HepG2 (cell line): ENCODE measurements at regions of chr9 and their contacts with region 1.

Region 1: GRCh38 chr9:73081979-73082657 is 69.5 kb upstream of the ANXA1 start:
- DNase-seq: peak; percentile 62
- ATAC-seq: peak; percentile 69
- H3K4me3 ChIP-seq: no peak overlapping the region
- H3K27ac ChIP-seq: no peak overlapping the region
- H3K4me1 ChIP-seq: peaks cover 6% of the 10 kb centered on the region
- H3K27me3 ChIP-seq: 0 out of 5 replicates have a peak, but pooled peaks cover 0 to 3% of the 10 kb centered on the region in 2 experiments
- CTCF ChIP-seq: peak; percentile 74
- EP300 ChIP-seq: no peak
- POLR2A ChIP-seq: no peak
- RAD21 ChIP-seq: peak; percentile 78

Region 2: DNA sequence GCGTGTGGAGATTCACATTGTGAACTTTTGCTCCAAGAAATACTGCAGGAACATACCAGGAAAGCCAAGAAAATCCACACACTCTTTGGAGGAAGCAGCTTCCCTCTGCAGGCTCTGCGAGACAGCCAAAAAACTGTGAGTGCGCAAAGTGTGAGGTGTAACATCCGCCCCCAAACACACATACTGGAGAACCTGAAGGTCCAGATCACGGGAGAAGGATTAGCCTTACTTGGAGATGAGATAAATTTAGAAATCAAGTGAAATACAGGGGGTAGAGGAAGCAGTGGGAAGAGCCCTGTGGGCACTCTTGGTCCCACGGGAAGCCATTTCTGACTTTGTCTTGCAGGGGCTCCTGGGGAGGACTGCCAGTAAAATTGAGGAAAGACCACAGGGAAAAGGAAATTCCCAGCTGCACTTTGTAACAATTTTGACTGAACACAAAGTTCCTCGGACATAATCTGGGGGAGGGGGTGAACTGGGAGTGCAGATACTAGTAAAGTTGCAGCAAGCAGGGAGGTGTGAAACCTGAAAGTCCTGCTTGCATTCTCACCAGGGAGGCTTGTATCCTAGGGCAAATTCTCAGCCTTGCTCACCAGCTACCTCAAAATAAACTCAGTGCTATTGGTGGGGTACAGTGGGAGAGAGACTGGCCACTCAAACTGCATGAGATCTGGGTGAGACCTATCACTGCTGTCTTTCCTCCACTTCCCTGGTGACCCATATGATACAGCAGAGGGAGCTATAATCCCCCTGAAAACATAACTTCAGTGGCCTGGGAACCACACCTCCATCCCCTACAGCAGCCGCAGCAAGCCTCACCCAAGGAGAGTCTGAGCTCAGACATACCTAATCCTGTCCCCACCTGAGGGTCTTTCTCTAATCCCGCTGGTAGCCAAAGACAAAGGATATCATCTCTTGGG is 238.3 kb before region 1 on chr9:
- CTCF ChIA-PET with region 1: interaction called, 14 read pairs
- POLR2A ChIA-PET with region 1: no interaction called
- in situ Hi-C with region 1: no loop called
- intact Hi-C with region 1: loop called (anchors 1 kb)
- DNase-seq: peak; percentile 74
- ATAC-seq: peak; percentile 100
- H3K4me3 ChIP-seq: peak overlapping the region; percentile 32 to 49 (median 40)
- H3K27ac ChIP-seq: peak overlapping the region; percentile 31
- H3K4me1 ChIP-seq: peaks cover 22% of the 10 kb centered on the region
- H3K27me3 ChIP-seq: no peaks in the 10 kb centered on the region
- CTCF ChIP-seq: peak; percentile 82
- EP300 ChIP-seq: no peak
- POLR2A ChIP-seq: no peak
- RAD21 ChIP-seq: peak; percentile 73; the same call in 1 of the 2 replicates

Region 3: DNA sequence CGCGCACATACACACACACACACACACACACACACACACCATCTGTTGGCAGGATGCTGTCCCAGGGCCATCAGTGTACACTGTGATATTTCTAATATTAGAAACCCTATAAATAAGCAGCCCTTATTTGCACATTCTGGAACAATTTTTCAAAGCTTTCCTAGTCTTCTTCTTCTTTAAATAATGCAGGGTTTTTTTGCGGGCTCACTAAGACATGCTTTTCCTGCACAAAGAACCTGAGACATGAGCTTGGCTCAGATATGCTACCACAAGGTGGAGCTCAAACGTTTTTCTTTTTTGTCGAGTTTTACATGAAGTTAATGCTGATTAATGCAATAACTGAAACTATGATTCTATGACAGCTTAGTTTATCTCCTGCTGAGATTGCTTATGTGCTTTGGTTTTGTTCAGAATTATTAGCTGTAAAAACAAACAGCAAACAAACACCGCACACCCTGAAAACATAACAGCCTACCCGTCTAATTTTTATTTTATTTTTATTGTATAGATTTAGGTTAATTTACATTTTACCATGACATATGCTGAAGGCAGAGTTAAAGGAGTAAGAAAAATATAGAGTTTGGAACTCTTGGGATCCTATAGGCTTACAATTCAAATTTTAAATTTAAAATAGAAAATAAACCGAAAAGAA is 225.0 kb before region 1 on chr9:
- CTCF ChIA-PET with region 1: interaction called, 15 read pairs
- POLR2A ChIA-PET with region 1: no interaction called
- in situ Hi-C with region 1: loop called (anchors 5 kb)
- intact Hi-C with region 1: loop called (anchors 1 kb)
- DNase-seq: peak; percentile 65
- ATAC-seq: no peak
- H3K4me3 ChIP-seq: no peak overlapping the region
- H3K27ac ChIP-seq: peak overlapping the region; percentile 99
- H3K4me1 ChIP-seq: peaks cover 30% of the 10 kb centered on the region
- H3K27me3 ChIP-seq: no peaks in the 10 kb centered on the region
- CTCF ChIP-seq: peak; percentile 70
- EP300 ChIP-seq: no peak
- POLR2A ChIP-seq: no peak
- RAD21 ChIP-seq: peak; percentile 43; the same call in 1 of the 2 replicates

Region 4: GRCh38 chr9:72871685-72872084 is 210.4 kb before region 1 on chr9:
- CTCF ChIA-PET with region 1: interaction called, 16 read pairs
- POLR2A ChIA-PET with region 1: no interaction called
- in situ Hi-C with region 1: no loop called
- intact Hi-C with region 1: loop called (anchors 1 kb)
- DNase-seq: peak; percentile 16
- ATAC-seq: no peak
- H3K4me3 ChIP-seq: no peak overlapping the region
- H3K27ac ChIP-seq: no peak overlapping the region
- H3K4me1 ChIP-seq: peaks cover 29% of the 10 kb centered on the region
- H3K27me3 ChIP-seq: no peaks in the 10 kb centered on the region
- CTCF ChIP-seq: peak; percentile 60
- EP300 ChIP-seq: no peak
- POLR2A ChIP-seq: no peak
- RAD21 ChIP-seq: peak; percentile 25; the same call in 1 of the 2 replicates

Region 5: GRCh38 chr9:73038613-73039012 is 43.5 kb before region 1 on chr9:
- CTCF ChIA-PET with region 1: no interaction called
- POLR2A ChIA-PET with region 1: no interaction called
- in situ Hi-C with region 1: no loop called
- intact Hi-C with region 1: loop called (anchors 5 kb)
- DNase-seq: no peak
- ATAC-seq: peak; percentile 73
- H3K4me3 ChIP-seq: peak overlapping the region in 1 of 3 experiments; percentile 43; a peak in 2 of 6 replicates
- H3K27ac ChIP-seq: peak overlapping the region; percentile 25
- H3K4me1 ChIP-seq: peaks cover 29% of the 10 kb centered on the region
- H3K27me3 ChIP-seq: no peaks in the 10 kb centered on the region
- CTCF ChIP-seq: no peak
- EP300 ChIP-seq: no peak
- POLR2A ChIP-seq: no peak
- RAD21 ChIP-seq: no peak

Region 6: DNA sequence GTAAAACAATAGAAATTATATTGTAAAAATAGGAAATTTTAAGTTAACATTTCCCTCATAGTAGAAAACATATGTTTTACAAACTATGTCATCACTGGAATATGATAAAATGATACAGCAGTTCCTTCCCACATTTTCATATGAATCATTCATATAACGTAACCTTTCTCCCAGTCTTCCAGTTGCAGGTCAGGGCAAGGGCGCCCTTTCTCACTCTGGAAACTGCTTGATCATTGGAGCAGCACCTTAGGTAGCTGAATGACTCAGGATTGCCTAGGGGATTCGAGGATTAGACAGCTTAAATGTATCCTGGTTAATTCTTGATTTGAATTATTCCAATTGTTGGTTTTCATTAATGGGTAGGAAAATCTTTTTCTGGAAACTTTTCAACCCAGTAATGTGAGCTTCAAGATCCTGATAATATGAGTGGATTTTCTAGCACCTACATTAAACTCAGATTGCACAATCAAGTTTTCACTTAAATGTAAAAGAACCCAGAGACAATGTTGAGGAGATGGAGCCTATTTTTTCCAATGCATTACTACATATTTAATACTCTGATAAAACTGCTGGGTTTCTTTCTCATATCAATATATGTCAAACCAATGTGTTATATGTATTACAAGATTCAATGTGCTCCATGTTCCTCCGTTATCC is 36.9 kb after region 1 on chr9:
- CTCF ChIA-PET with region 1: no interaction called
- POLR2A ChIA-PET with region 1: no interaction called
- in situ Hi-C with region 1: no loop called
- intact Hi-C with region 1: no loop called
- DNase-seq: no peak
- ATAC-seq: no peak
- H3K4me3 ChIP-seq: no peak overlapping the region
- H3K27ac ChIP-seq: no peak overlapping the region
- H3K4me1 ChIP-seq: no peaks in the 10 kb centered on the region
- H3K27me3 ChIP-seq: no peaks in the 10 kb centered on the region
- CTCF ChIP-seq: no peak
- EP300 ChIP-seq: no peak
- POLR2A ChIP-seq: no peak
- RAD21 ChIP-seq: no peak